ENCODE measurements at regions of chr4 and their contacts with region 1.

Region 1: GRCh38 chr4:7827991-7828720 is 111.5 kb downstream of the AFAP1 start:
- DNase-seq: peak; percentile 96
- H3K4me3 ChIP-seq: peak overlapping the region in 1 of 3 experiments; percentile 1
- H3K27ac ChIP-seq: peak overlapping the region; percentile 73
- H3K4me1 ChIP-seq: peaks cover 22% of the 10 kb centered on the region
- H3K27me3 ChIP-seq: no peaks in the 10 kb centered on the region
- CTCF ChIP-seq: no peak

Region 2: DNA sequence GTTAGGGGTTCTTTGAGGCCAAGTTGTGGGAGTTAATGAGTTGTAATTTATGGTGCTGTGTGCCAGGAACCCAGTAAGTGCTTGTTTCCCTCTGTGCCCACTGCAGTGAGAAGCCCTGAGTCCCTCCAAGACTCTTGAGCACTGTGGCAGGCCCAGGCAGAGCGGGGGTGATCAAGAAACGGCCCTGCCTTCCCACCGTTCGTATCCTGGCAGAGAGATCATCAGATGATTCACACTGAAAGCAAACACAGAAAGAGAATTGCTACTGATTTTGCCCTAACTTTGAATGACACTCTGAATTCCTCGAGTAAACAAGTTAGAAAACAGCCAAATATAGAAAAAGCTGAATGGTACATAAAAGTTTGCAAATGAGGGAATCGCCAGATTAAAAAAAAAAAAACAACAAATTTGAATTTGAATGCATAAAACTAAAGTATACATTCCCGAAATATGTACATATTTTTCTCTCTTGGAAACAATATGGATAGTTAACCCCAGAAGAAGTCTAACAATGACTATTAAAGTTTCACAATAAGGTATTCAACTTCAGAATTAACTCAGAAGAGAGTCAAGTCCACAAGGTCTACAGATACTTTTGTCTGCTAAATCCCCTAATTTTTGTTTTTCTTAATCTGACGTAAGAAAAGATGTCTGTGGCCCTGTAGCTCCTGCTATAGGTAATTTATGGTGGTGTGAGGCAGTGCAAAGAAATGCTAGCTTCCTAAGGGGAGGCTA is 39.7 kb after region 1 on chr4:
- CTCF ChIA-PET with region 1: no interaction called
- dilution Hi-C with region 1: no loop called
- in situ Hi-C with region 1: no loop called
- intact Hi-C with region 1: loop called (anchors 1 kb)
- DNase-seq: peak; percentile 34
- H3K4me3 ChIP-seq: no peak overlapping the region
- H3K27ac ChIP-seq: no peak overlapping the region
- H3K4me1 ChIP-seq: peaks cover 20% of the 10 kb centered on the region
- H3K27me3 ChIP-seq: no peaks in the 10 kb centered on the region
- CTCF ChIP-seq: no peak

Region 3: DNA sequence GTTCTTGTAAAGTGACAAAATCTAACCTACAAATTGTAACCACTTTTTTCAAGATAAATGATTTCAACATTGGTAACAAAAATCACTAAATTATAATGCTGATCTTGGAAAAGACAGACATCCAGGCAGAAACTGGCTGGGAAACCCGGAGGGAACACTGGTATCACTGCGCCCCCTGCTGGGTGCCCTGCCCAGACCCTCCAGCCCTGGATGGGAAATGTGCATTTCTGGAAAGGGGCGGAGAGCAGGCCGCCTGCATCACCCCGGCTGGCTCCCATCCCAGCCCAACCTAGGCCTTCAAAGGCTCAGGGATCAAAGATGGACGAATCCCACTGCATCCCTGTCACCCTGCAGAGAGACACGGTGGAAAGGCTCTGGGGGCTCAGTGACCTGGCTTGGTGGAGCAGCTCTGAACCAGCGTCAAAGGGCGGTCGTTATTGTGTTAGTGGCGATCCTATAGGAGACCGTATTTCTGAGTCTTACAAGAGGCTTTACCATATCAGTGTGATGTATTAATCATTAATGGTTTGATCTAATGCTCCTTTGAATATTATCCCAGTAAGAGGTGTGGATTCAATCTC is 575.1 kb after region 1 on chr4:
- CTCF ChIA-PET with region 1: no interaction called
- dilution Hi-C with region 1: no loop called
- in situ Hi-C with region 1: no loop called
- intact Hi-C with region 1: no loop called
- DNase-seq: peak; percentile 56
- H3K4me3 ChIP-seq: no peak overlapping the region
- H3K27ac ChIP-seq: no peak overlapping the region
- H3K4me1 ChIP-seq: peaks cover 16% of the 10 kb centered on the region
- H3K27me3 ChIP-seq: no peaks in the 10 kb centered on the region
- CTCF ChIP-seq: peak; percentile 93

Measured in mammary epithelial cell (primary cell).